Transverse colon (tissue), 4 donors: ENCODE measurements at regions of chr11 and their contacts with region 1.

Region 1: DNA sequence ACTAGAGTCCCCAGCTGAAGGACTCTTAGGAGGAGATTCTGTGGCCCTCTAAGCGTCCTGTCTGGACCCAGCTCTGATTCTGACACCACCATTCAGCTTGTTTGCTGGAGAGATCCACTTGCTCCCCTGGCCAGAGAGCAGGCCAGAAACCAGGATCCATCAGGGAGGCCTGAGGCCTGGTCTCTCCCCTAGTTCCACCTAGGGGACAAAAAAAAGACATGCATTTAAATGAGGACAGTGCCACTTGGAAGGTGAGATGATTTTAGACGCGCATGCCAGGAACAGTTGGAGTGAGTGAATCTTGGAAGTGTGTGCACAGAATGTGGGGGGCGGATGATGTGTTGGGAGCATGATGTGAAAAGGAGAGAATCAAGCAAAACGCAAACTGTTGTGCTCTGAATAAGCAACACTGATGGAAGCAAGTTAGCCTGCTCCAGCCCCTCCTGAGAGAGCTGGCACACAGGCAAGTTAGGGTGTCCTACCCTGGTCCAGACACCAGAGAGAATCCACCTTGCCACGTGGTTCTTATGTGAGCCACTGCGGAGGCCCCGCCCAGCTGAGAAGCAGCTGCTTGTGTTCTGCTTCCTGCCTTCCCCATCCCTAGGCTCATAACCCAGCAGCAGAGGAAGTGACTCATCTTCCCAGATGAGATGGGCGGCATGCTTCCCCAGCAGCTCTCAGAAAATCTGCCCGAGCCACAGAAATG is 8.0 kb upstream of the SLCO2B1 start:
- DNase-seq: peak; percentile 70
- H3K4me3 ChIP-seq: no peak overlapping the region
- H3K27ac ChIP-seq: peak overlapping the region; percentile 14 to 61 (median 35)
- H3K4me1 ChIP-seq: peaks cover 0 to 44% (median 19%) of the 10 kb centered on the region in 4 donors
- H3K27me3 ChIP-seq: no peaks in the 10 kb centered on the region
- CTCF ChIP-seq: peak in 1 of 5 experiments; percentile 20
- EP300 ChIP-seq: no peak
- POLR2A ChIP-seq: no peak

Region 2: DNA sequence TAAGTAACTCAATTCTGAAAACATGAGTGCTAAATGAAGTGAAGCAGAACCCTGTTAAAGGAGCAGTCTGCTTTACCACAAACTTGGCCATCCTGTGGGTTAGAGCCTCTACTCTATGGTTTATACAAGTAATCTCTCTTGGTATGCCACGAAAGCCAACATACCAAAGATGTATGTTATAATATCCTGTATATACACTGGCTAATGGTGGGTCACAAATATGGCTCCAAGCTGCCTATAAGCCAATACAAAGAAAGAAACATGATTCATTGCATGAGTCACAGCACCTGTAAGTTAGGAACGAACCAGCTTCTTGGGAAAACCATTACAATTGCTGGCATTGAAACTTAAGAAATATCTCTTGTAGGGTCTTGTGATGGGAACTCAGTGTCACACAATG is 210.1 kb before region 1 on chr11:
- in situ Hi-C with region 1: no loop called
- intact Hi-C with region 1: no loop called
- DNase-seq: no peak
- H3K4me3 ChIP-seq: no peak overlapping the region
- H3K27ac ChIP-seq: no peak overlapping the region
- H3K4me1 ChIP-seq: no peaks in the 10 kb centered on the region
- H3K27me3 ChIP-seq: no peaks in the 10 kb centered on the region
- CTCF ChIP-seq: no peak
- EP300 ChIP-seq: no peak
- POLR2A ChIP-seq: no peak

Region 3: GRCh38 chr11:75204685-75205563 is 62.1 kb after region 1 on chr11:
- in situ Hi-C with region 1: loop called (anchors 5 to 10 kb)
- intact Hi-C with region 1: loop called (anchors 2 kb)
- DNase-seq: peak; percentile 90
- H3K4me3 ChIP-seq: no peak overlapping the region
- H3K27ac ChIP-seq: no peak overlapping the region
- H3K4me1 ChIP-seq: peaks cover 0 to 3% (median 0%) of the 10 kb centered on the region in 4 donors
- H3K27me3 ChIP-seq: no peaks in the 10 kb centered on the region
- CTCF ChIP-seq: peak; percentile 81 to 94 (median 91)
- EP300 ChIP-seq: no peak
- POLR2A ChIP-seq: peak; percentile 23

Region 4: DNA sequence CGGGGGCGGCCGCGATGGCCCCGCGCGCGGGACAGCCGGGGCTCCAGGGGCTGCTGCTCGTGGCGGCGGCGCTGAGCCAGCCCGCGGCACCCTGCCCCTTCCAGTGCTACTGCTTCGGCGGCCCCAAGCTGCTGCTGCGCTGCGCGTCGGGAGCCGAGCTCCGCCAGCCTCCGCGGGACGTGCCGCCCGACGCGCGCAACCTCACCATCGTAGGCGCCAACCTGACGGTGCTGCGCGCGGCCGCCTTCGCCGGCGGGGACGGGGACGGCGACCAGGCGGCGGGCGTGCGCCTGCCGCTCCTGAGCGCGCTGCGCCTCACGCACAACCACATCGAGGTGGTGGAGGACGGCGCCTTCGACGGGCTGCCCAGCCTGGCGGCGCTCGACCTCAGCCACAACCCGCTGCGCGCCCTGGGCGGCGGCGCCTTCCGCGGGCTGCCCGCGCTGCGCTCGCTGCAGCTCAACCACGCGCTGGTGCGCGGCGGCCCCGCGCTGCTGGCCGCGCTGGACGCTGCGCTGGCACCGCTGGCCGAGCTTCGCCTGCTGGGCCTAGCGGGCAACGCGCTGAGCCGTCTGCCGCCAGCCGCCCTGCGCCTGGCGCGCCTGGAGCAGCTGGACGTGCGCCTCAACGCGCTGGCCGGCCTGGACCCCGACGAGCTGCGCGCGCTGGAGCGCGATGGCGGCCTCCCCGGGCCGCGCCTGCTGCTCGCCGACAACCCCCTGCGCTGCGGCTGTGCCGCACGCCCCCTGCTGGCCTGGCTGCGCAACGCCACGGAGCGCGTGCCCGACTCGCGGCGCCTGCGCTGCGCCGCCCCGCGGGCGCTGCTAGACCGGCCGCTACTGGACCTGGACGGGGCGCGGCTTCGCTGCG is 98.4 kb after region 1 on chr11:
- in situ Hi-C with region 1: loop called in 3 of 4 experiments (anchors 5 to 10 kb)
- intact Hi-C with region 1: loop called (anchors 5 kb)
- DNase-seq: peak; percentile 87
- H3K4me3 ChIP-seq: peak overlapping the region in 3 of 4 donors; percentile 19 to 49 (median 40)
- H3K27ac ChIP-seq: peak overlapping the region in 1 of 4 donors; percentile 6
- H3K4me1 ChIP-seq: peaks cover 0 to 16% (median 11%) of the 10 kb centered on the region in 4 donors
- H3K27me3 ChIP-seq: peaks cover 57% of the 10 kb centered on the region
- CTCF ChIP-seq: peak in 4 of 5 experiments; percentile 22 to 90 (median 69)
- EP300 ChIP-seq: no peak
- POLR2A ChIP-seq: no peak

Region 5: DNA sequence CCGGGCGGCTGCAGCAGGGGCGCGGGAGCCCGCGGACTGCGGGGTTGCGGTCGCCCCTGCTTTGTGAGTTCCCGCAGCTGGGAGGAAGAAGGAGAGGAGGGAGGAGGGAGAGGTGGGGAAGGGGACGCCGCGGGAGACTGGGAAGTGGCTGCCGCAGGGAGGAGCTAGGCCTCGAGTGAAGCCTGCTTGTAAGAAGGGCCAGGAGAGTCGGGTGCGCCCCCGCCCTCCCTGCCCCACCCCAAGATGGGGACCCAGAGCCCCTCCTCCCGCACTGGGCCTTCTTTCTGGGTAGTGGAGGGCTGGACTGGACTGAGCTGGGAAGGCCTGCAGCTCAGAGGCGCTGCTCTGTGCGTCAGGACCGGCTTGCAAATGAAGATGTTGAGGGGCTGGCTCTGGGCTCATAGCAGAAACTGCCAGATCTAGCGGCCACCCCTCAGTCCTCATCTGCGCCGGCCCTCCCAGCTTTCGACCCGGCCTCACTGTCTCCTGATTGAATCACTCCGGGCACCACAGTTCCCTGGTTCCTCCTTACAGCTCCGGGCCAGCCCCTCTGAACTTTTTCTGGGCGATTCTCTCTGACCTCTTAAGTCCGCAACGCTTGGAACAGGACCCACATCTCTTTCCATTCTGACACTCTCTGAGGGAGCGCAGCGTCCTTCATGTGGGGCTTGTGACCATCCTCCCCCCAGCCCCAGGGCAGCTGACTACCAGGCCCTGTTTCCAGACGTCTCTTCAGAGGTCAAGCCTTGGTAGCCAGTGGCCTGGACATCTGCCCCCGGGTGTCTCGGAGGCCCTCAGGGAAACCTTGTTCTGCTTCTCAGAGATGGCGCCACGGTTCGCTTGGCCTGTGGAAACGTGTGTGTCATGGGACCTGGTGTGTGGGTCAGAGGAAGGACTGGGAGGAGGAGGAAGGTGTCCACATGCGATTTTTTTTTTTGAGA is 441.1 kb after region 1 on chr11:
- in situ Hi-C with region 1: no loop called
- intact Hi-C with region 1: no loop called
- DNase-seq: peak; percentile 45
- H3K4me3 ChIP-seq: peak overlapping the region; percentile 20 to 71 (median 64)
- H3K27ac ChIP-seq: peak overlapping the region; percentile 87 to 95 (median 92)
- H3K4me1 ChIP-seq: peaks cover 0 to 13% (median 4%) of the 10 kb centered on the region in 4 donors
- H3K27me3 ChIP-seq: peaks cover 9% of the 10 kb centered on the region
- CTCF ChIP-seq: no peak
- EP300 ChIP-seq: no peak
- POLR2A ChIP-seq: peak; percentile 29